ENCODE measurements at regions of chr18 and their contacts with region 1.

Region 1: DNA sequence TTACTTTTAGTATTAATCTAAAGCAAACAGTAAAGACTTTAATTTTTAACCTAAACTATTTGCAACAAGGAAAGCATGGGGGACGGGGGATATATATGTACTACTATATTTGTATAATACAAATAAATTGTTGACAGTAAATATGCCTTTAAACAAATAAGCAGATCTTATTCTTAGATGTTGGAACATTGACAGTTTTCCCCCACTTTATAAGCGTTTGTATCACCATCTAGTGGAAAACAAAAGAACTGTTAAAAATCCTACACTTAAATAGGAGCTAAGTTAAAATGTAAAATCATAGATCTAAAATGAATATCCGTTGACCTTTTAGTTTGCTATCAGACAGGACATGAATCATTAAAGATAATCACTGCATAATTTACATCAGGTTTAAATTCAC is 50.0 kb downstream of the RBBP8 start:
- DNase-seq: peak; percentile 5 to 18 (median 16)
- H3K4me3 ChIP-seq: no peak overlapping the region
- H3K4me3 Mint-ChIP-seq: no peak overlapping the region
- H3K27ac ChIP-seq: no peak overlapping the region
- H3K27ac Mint-ChIP-seq: no peak overlapping the region
- H3K4me1 ChIP-seq: peaks cover 0 to 2% of the 10 kb centered on the region in 2 donors
- H3K4me1 Mint-ChIP-seq: peaks cover 10% of the 10 kb centered on the region
- H3K27me3 ChIP-seq: no peaks in the 10 kb centered on the region
- H3K27me3 Mint-ChIP-seq: no peaks in the 10 kb centered on the region
- CTCF ChIP-seq: peak; percentile 64

Region 2: DNA sequence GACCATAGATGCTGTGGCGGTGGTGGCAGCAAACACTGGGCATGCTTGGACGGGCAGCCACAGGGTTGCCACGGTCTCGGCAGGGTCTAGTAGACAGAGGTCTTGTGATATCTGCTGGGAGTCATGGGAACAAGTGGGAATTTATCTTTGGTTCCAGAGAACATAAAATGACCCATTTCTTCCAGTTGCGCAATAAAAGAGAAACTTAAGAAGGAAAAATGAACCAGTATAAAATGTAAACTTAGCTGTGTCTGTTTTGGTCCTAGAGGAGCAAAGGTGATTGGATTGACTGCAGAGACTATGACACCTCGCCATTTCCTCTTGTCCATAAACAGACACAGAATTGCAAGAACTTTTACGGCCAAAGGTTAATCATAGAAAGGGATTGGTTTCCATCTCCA is 182.6 kb before region 1 on chr18:
- intact Hi-C with region 1: loop called in 1 of 2 experiments (anchors 5 kb)
- DNase-seq: no peak
- H3K4me3 ChIP-seq: no peak overlapping the region
- H3K4me3 Mint-ChIP-seq: no peak overlapping the region
- H3K27ac ChIP-seq: no peak overlapping the region
- H3K27ac Mint-ChIP-seq: no peak overlapping the region
- H3K4me1 ChIP-seq: no peaks in the 10 kb centered on the region
- H3K4me1 Mint-ChIP-seq: no peaks in the 10 kb centered on the region
- H3K27me3 ChIP-seq: no peaks in the 10 kb centered on the region
- H3K27me3 Mint-ChIP-seq: peaks cover 2 to 4% (median 4%) of the 10 kb centered on the region in 3 donors
- CTCF ChIP-seq: no peak

Region 3: DNA sequence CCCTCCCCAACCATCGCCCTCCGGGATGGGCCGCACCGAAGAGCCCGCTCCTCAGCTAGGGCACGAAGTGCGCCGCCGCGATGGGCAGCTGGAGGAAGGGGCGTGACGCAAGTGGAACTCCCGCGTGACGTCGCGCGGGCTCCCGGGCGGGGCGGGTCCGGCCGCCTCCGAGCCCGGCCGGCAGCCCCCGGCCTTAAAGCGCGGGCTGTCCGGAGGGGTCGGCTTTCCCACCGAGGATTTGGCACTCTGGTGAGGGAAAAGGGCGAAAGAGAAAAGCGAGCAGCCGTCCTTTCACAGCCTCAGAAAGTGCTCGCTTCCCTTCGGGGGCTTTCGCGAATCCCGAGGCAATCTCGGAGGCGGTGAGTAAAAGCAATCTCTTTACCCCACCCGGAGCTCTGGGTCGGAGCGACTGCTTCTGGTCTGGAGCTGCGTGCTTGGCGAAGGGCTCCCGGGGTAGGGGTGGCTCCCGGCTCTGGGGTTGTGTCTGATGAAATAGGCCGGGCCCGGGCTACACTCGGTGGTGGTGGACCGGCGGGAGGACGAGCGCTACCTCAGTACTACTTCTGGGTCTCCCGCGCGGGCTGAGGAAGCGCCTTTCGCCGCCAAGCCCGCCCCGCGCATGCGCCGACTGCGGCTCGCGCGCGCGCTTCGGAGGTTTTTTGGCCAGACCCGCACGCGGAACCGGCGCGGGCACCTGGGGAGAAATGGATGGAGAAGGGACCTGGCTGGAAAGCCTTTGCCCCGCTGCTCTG is 49.8 kb before region 1 on chr18 and contains the start of gene RBBP8:
- intact Hi-C with region 1: loop called in 1 of 2 experiments (anchors 5 kb)
- DNase-seq: peak; percentile 74 to 87 (median 79)
- H3K4me3 ChIP-seq: peak within 1 kb of the TSS; percentile 77 to 93 (median 90)
- H3K4me3 Mint-ChIP-seq: peak within 1 kb of the TSS; percentile 92 to 95
- H3K27ac ChIP-seq: peak within 1 kb of the TSS; percentile 96
- H3K27ac Mint-ChIP-seq: peak within 1 kb of the TSS; percentile 93 to 99 (median 98)
- H3K4me1 ChIP-seq: peaks cover 4 to 16% of the 10 kb centered on the region in 2 donors
- H3K4me1 Mint-ChIP-seq: peaks cover 15% of the 10 kb centered on the region
- H3K27me3 ChIP-seq: no peaks in the 10 kb centered on the region
- H3K27me3 Mint-ChIP-seq: peaks cover 0 to 5% (median 0%) of the 10 kb centered on the region in 3 donors
- CTCF ChIP-seq: no peak
- polyA plus RNA-seq, gene RBBP8: 5.8 to 9.6 (median 7.8) TPM

Region 4: GRCh38 chr18:24075731-24076130 is 1092.6 kb after region 1 on chr18:
- intact Hi-C with region 1: no loop called
- DNase-seq: no peak
- H3K4me3 ChIP-seq: no peak overlapping the region
- H3K4me3 Mint-ChIP-seq: no peak overlapping the region
- H3K27ac ChIP-seq: no peak overlapping the region
- H3K27ac Mint-ChIP-seq: peak overlapping the region in 2 of 7 donors; percentile 68 to 80
- H3K4me1 ChIP-seq: no peaks in the 10 kb centered on the region
- H3K4me1 Mint-ChIP-seq: no peaks in the 10 kb centered on the region
- H3K27me3 ChIP-seq: no peaks in the 10 kb centered on the region
- H3K27me3 Mint-ChIP-seq: peaks cover 0 to 2% (median 0%) of the 10 kb centered on the region in 3 donors
- CTCF ChIP-seq: no peak

Measured in CD14-positive monocyte (primary cell).